Activated CD4-positive, alpha-beta T cell treated with anti-CD3 and anti-CD28 coated beads, Interleukin-2, amount 10 ng/mL, durations not matched to agents 24 days and 14 days (primary cell): ENCODE measurements at regions of chr12 and their contacts with region 1.

Region 1: GRCh38 chr12:94644141-94644979 is 6.0 kb downstream of the TMCC3 start:
- DNase-seq: peak; percentile 70
- H3K4me3 Mint-ChIP-seq: peak overlapping the region; percentile 47
- H3K27ac Mint-ChIP-seq: peak overlapping the region; percentile 41
- H3K4me1 Mint-ChIP-seq: peaks cover 40% of the 10 kb centered on the region
- H3K27me3 Mint-ChIP-seq: peaks cover 64% of the 10 kb centered on the region

Region 2: GRCh38 chr12:93839064-93839463 is 805.3 kb before region 1 on chr12:
- intact Hi-C with region 1: no loop called
- DNase-seq: no peak
- H3K4me3 Mint-ChIP-seq: no peak overlapping the region
- H3K27ac Mint-ChIP-seq: no peak overlapping the region
- H3K4me1 Mint-ChIP-seq: peaks cover 4% of the 10 kb centered on the region
- H3K27me3 Mint-ChIP-seq: no peaks in the 10 kb centered on the region

Region 3: DNA sequence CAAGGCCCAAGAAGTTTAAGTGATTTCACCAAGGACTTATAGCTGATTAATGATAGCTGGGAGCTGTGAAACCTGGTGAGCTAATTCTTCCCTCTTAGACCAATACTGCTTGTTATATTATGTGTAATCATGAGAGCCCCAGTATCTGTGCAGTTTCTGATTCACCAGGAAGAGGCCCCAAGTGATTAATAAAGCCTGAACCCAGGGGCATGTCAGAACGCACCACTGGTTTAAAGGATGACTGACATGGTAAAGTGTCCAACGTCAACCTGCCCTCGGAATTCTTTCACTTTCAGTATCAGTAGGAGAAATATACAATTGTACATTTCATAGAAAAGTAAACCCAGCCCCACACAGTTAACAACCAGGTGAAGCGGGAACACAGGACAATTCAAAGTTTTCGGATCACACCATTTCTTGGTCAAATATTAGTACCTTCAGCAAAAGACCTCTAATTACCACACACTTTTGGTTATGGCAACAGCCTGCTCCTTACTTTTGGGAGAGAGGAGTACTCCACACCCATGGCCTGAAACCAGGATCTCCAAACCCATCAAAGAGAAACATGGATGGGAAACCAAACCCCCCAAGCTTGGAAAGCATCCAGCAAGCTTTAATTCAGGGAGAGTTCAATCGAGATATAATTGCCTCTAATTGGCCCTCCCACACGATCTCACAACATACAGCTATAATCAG is 22.5 kb before region 1 on chr12:
- intact Hi-C with region 1: loop called (anchors 1 kb)
- DNase-seq: peak; percentile 82
- H3K4me3 Mint-ChIP-seq: peak overlapping the region; percentile 56
- H3K27ac Mint-ChIP-seq: peak overlapping the region; percentile 64
- H3K4me1 Mint-ChIP-seq: peaks cover 13% of the 10 kb centered on the region
- H3K27me3 Mint-ChIP-seq: peaks cover 2% of the 10 kb centered on the region